ENCODE measurements at regions of chr1 and their contacts with region 1.

Region 1: DNA sequence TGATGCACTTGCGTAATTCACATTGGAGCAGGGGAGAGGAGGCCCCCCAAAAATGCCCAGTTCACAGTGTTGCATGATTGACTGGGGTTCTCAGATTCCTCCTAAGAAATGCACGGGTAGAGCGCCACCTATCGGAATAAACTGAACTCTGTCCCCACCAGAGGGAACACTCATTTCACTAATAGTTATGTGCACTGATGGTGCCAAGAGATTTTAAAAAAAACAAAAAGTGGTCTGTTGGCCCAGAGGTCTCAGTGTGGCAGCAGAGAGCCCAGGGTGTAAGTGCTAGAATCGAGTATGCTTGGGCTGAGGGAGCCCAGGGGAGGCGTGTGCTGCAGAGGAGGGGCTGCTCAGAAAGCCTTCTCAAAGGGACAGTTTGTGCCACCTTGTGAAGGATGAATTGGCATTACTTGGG is 6.9 kb downstream of the PINK1 start:
- DNase-seq: peak; percentile 78
- ATAC-seq: peak; percentile 88
- H3K4me3 Mint-ChIP-seq: no peak overlapping the region
- H3K27ac Mint-ChIP-seq: no peak overlapping the region
- H3K4me1 Mint-ChIP-seq: no peaks in the 10 kb centered on the region
- H3K27me3 Mint-ChIP-seq: no peaks in the 10 kb centered on the region

Region 2: GRCh38 chr1:20212685-20213331 is 427.4 kb before region 1 on chr1:
- CTCF ChIA-PET with region 1: interaction called, 3 read pairs
- POLR2A ChIA-PET with region 1: no interaction called
- intact Hi-C with region 1: loop called in 1 of 2 experiments (anchors 1 kb)
- DNase-seq: peak; percentile 74
- ATAC-seq: peak; percentile 61
- H3K4me3 Mint-ChIP-seq: no peak overlapping the region
- H3K27ac Mint-ChIP-seq: no peak overlapping the region
- H3K4me1 Mint-ChIP-seq: peaks cover 8% of the 10 kb centered on the region
- H3K27me3 Mint-ChIP-seq: peaks cover 46% of the 10 kb centered on the region

Region 3: DNA sequence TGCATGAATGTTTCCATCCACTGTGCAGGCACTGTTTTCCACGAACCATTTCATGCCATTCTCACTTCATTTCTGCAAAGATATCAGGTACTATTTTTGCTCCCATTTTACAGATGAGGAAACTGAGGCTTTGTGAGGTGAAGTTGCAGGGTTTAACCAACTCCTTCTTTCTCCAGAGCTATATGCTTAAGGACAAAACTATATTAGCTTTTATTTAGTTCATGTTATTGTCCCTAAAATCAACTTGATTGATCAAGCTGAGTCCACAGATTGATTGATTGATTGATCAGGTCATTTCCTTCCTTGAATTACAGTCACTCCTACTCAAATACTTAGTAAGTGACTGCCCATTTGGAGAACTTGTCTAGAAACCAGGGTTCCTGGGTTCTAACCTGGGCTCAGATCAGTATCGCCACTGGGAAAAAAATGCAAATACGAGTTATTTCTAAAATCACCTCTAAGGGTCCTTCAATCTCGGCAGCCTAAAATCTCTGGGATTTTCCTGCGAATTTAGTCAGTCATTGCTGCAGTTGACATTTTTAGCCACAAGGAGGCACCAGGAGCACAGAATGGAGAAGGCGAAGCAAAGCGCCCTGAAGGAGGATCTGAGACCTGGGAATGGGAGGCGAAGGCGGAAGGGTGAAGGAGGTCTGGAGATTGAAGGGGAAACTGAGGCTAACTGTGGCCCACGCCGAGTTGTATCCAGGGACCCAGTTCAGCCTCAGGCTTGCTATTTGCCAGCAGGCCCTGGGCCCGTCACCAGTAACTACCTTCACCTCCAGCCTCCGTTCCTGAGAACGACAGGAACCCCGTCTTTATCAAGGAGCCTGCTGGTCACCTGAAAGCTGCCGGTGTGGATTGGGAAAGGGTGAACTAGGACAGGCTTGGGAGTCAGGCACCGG is 118.0 kb before region 1 on chr1:
- CTCF ChIA-PET with region 1: interaction called, 5 read pairs
- POLR2A ChIA-PET with region 1: no interaction called
- intact Hi-C with region 1: loop called (anchors 1 kb)
- DNase-seq: peak; percentile 82
- ATAC-seq: no peak
- H3K4me3 Mint-ChIP-seq: no peak overlapping the region
- H3K27ac Mint-ChIP-seq: no peak overlapping the region
- H3K4me1 Mint-ChIP-seq: no peaks in the 10 kb centered on the region
- H3K27me3 Mint-ChIP-seq: peaks cover 12% of the 10 kb centered on the region

Region 4: GRCh38 chr1:20574686-20575540 is 65.3 kb before region 1 on chr1:
- CTCF ChIA-PET with region 1: interaction called, 30 read pairs
- POLR2A ChIA-PET with region 1: no interaction called
- intact Hi-C with region 1: loop called (anchors 1 kb)
- DNase-seq: peak; percentile 90
- ATAC-seq: peak; percentile 91
- H3K4me3 Mint-ChIP-seq: no peak overlapping the region
- H3K27ac Mint-ChIP-seq: no peak overlapping the region
- H3K4me1 Mint-ChIP-seq: peaks cover 3% of the 10 kb centered on the region
- H3K27me3 Mint-ChIP-seq: peaks cover 22% of the 10 kb centered on the region